ENCODE measurements at regions of chr19 and their contacts with region 1.

Region 1: DNA sequence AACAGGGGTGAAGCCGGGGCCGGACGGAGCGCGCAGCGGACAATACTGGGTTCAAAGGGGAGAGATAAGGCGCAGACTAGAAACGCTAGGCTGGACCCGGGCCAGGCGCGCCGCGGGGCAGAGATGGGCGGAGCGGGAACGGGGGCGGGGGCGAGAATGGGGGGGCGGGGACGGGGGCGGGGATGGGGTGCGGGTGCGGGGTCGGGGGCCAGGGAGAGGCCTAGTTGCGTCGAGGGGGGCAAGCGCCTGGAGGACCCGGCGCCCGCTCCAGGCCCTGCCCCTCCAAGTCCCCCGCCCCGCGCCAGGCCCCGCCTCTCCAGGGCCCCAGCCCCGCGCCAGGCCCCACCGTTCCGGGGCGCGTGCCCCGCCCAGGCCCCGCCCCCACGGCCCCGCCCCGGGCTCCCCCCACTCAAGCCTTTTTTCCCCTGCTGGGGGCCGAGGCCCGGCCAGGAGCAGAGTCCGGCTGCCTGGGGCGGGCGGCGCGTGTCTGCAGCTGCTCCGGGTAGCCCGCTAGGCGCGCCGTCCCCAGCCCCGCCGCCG is at the start of gene CERS4:
- DNase-seq: peak; percentile 85
- H3K4me3 Mint-ChIP-seq: peak within 1 kb of the TSS; percentile 91
- H3K27ac Mint-ChIP-seq: peak within 1 kb of the TSS; percentile 76
- H3K4me1 Mint-ChIP-seq: peaks cover 16% of the 10 kb centered on the region
- H3K27me3 Mint-ChIP-seq: no peaks in the 10 kb centered on the region
- total RNA-seq, gene CERS4: 24.3 to 25.1 TPM

Region 2: GRCh38 chr19:8194528-8195267 is 14.3 kb before region 1 on chr19:
- CTCF ChIA-PET with region 1: no interaction called
- POLR2A ChIA-PET with region 1: interaction called, 9 read pairs
- intact Hi-C with region 1: loop called (anchors 1 kb)
- DNase-seq: peak; percentile 73
- H3K4me3 Mint-ChIP-seq: peak overlapping the region; percentile 37
- H3K27ac Mint-ChIP-seq: peak overlapping the region; percentile 90
- H3K4me1 Mint-ChIP-seq: peaks cover 39% of the 10 kb centered on the region
- H3K27me3 Mint-ChIP-seq: no peaks in the 10 kb centered on the region

Region 3: DNA sequence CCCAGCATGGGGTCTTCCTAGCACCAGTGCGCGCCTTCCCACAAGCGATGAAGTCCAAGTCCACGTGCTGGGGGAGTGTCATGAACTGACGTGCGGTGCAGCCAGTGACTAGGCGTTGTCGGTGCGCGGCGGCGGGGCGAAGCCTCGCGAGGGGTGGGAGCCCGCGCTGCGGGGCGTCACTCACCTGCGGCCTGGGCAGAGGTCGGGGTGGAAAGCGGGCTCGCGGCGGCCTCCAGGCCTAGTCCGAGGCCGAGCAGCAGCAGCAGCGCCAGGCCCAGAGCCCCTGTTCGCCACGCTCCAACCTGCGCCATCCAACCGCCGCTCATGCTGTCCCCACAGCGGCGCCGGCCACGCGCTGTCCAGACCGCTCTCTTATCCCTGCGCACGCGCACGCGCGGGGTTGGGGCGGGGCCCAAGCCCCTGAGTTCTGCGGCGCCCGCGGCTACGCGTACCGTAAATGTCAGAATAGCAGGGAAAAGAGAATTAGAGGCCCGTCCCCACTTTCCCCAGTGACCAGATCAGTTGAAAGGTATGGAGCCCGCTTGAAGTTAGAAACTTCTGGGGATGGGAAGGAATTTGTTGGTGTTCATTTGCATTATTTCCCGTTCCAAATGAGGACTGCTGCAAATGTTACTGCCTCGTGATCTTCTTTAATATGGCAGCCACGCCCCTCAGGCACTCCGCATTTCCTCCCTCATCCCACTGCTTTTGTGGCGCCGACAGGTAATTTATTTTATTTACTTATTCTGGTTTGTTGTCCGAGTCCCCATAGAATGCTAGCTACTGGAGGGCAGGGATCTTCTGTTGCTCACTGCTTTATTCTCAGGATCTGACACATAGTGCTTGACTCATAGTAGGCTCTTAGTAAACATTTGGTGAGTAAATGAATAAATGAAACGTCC is 99.2 kb after region 1 on chr19 and contains the start of gene CD320:
- CTCF ChIA-PET with region 1: no interaction called
- POLR2A ChIA-PET with region 1: no interaction called
- intact Hi-C with region 1: loop called (anchors 1 kb)
- DNase-seq: peak; percentile 90
- H3K4me3 Mint-ChIP-seq: peak within 1 kb of the TSS; percentile 96
- H3K27ac Mint-ChIP-seq: peak within 1 kb of the TSS; percentile 92
- H3K4me1 Mint-ChIP-seq: peaks cover 31% of the 10 kb centered on the region
- H3K27me3 Mint-ChIP-seq: no peaks in the 10 kb centered on the region
- total RNA-seq, gene CD320: 44.9 to 45.4 TPM

Measured in activated CD4-positive, alpha-beta memory T cell treated with anti-CD3 and anti-CD28 coated beads for 36 hours (primary cell).